PC-9 (cell line): ENCODE measurements at regions of chr11 and their contacts with region 1.

Region 1: DNA sequence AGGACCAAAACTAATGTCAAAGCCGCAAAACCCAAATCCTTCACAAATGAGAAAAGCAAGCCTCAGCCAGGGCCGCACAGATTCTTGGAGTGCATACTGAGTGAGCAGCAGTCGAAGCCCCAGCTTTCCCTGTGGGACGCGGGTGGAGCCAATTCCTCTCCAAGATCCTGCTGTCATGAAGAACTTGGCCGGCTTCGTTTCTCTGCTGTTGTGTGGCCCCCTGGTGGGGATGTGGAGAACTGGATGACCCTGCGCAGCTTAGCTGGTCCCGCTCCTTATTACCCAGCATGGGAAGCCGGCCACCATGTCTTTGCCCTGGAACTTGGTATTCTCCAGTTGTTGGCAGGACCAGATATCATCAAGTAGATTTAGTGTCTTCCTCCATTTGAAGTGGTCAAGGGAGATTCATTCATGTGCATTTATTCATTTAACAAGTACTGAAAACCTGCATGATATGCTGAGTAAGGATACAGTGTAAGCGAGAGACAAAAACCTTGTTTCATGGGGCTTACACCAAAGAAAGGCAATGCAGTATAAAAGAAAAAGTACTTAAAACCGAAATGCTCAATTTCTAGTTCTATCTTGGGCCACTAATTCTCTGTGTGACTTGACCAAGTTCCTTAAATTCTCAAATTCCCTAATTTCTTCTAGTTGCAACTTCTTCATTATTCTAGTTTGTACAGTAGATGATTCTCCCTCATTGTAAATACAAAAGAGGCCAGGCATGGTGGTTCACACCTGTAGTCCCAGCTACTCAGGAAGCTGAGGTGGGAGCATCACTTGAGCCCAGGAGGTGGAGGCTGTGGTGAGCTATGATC is 56.7 kb upstream of the CRTAM start:
- DNase-seq: peak; percentile 62 to 82
- H3K4me3 ChIP-seq: no peak overlapping the region
- H3K27ac ChIP-seq: no peak overlapping the region
- H3K4me1 ChIP-seq: peaks cover 62% of the 10 kb centered on the region
- H3K27me3 ChIP-seq: no peaks in the 10 kb centered on the region
- CTCF ChIP-seq: peak; percentile 95

Region 2: DNA sequence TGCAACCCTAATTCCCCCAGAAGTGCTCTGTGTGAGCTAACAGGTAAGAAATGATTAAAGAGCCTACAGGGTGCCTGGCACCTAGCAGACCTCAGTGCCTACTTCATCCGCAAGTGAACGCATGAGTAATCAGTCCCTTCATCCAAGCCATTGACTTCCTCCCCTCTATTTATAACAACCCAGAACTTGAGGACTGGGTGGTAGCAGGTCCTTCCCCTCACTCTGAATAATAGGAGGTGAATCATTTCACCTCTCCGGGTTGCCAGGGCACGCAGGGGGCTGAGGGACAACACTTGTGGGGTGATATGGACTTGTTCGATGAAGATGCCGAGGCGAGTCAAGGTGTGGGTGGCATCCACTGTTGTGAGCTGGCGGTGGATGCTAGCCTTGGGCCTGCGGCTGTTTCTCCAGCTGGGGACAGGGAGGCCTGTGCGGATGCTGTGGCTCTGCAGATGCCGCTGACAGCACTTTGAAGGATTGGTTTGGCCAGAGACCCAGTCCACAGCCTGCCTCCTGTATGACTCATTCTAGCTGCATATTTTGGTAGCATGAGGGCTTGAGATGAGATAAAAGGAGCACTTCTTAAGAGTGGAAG is 1317.1 kb before region 1 on chr11:
- CTCF ChIA-PET with region 1: no interaction called
- POLR2A ChIA-PET with region 1: interaction called, 22 read pairs
- intact Hi-C with region 1: no loop called
- DNase-seq: peak; percentile 72 to 96
- H3K4me3 ChIP-seq: peak overlapping the region; percentile 9; the same call in 1 of the 2 replicates
- H3K27ac ChIP-seq: peak overlapping the region; percentile 95
- H3K4me1 ChIP-seq: peaks cover 93% of the 10 kb centered on the region
- H3K27me3 ChIP-seq: no peaks in the 10 kb centered on the region
- CTCF ChIP-seq: no peak

Region 3: DNA sequence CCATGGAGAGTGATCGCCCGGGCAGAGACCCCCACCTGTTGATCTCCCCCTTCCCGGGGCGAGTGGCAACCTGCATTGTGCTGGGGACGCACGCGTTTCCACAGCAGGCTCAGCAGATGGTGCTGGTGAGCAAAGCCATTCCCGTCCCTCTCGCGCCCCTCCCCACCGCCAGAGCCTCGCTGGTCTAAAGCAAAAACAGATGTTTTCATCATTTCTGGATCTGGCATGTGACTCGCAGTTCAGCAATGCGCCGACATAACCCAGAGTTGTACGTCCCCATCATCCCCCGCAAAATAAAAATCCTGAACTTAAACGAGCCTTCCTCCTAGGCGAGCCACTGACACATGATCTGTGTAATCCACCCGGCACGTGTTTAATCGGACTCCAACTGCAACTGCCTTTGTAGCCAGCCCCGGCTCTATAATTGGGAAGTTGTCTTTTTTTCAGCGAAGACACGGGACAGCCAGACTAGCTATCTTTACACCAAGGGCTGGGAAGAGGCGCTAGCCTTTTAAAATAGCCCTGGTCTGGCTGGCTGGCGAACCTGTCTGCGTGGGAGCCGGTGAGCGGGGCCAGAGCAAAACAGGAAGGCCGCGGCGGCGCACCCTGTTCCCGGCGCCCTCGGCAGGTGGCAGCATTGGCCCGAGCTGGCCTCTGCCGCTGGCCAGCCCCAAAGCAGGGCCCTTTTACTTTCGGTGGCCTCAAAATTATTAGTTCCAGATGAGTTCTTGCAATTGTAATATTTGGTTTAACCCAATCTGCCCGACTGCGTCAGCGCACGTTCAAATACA is 1125.9 kb before region 1 on chr11:
- CTCF ChIA-PET with region 1: no interaction called
- POLR2A ChIA-PET with region 1: no interaction called
- intact Hi-C with region 1: loop called (anchors 10 kb)
- DNase-seq: peak; percentile 58 to 81
- H3K4me3 ChIP-seq: peak overlapping the region; percentile 60
- H3K27ac ChIP-seq: peak overlapping the region; percentile 52
- H3K4me1 ChIP-seq: peaks cover 11% of the 10 kb centered on the region; the same call in 1 of the 2 replicates
- H3K27me3 ChIP-seq: no peaks in the 10 kb centered on the region
- CTCF ChIP-seq: peak; percentile 94

Region 4: DNA sequence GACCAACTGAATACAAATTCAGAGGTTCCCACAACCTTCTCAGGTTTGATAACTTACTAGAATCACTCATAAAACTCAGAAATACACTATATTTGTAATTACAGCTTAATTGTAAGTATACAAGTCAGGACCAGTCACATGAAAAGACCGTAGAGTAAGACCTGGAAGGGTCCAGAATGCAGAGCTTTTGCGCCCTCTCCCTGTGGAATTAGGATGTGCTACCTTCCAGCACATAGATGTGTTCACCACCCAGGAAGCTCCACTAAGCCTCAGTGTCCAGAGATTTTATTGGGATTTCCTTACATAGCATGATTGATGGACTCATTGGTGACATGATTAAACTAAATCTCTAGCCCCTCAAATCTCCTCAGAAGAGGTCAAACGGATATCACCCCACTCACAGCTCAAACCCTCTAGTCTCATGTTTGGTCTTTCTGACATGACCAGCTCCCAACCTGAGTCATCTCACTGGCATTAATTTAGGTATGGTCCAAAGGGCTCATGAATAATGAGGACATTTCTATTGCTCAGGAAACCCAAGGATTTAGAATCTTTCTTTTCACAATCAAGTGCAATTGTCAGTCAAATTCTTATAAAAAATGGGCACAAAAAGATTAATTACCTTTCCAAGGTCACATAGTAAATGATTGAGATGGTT is 203.3 kb before region 1 on chr11:
- CTCF ChIA-PET with region 1: no interaction called
- POLR2A ChIA-PET with region 1: no interaction called
- intact Hi-C with region 1: loop called (anchors 1 kb)
- DNase-seq: no peak
- H3K4me3 ChIP-seq: no peak overlapping the region
- H3K27ac ChIP-seq: no peak overlapping the region
- H3K4me1 ChIP-seq: peaks cover 11% of the 10 kb centered on the region
- H3K27me3 ChIP-seq: no peaks in the 10 kb centered on the region
- CTCF ChIP-seq: no peak

Region 5: GRCh38 chr11:122628810-122629555 is 152.6 kb before region 1 on chr11:
- CTCF ChIA-PET with region 1: interaction called, 20 read pairs
- POLR2A ChIA-PET with region 1: interaction called, 3 read pairs
- intact Hi-C with region 1: loop called (anchors 1 kb)
- DNase-seq: peak; percentile 53 to 65
- H3K4me3 ChIP-seq: no peak overlapping the region
- H3K27ac ChIP-seq: no peak overlapping the region
- H3K4me1 ChIP-seq: peaks cover 36% of the 10 kb centered on the region
- H3K27me3 ChIP-seq: no peaks in the 10 kb centered on the region
- CTCF ChIP-seq: peak; percentile 86

Region 6: GRCh38 chr11:122661182-122661945 is 120.2 kb before region 1 on chr11:
- CTCF ChIA-PET with region 1: no interaction called
- POLR2A ChIA-PET with region 1: interaction called, 3 read pairs
- intact Hi-C with region 1: loop called (anchors 1 kb)
- DNase-seq: peak; percentile 64 to 100
- H3K4me3 ChIP-seq: peak overlapping the region; percentile 39; the same call in 1 of the 2 replicates
- H3K27ac ChIP-seq: peak overlapping the region; percentile 91
- H3K4me1 ChIP-seq: peaks cover 87% of the 10 kb centered on the region
- H3K27me3 ChIP-seq: no peaks in the 10 kb centered on the region
- CTCF ChIP-seq: no peak

Region 7: GRCh38 chr11:122711831-122712381 is 69.7 kb before region 1 on chr11:
- CTCF ChIA-PET with region 1: no interaction called
- POLR2A ChIA-PET with region 1: interaction called, 3 read pairs
- intact Hi-C with region 1: loop called (anchors 2 kb)
- DNase-seq: peak; percentile 49 to 72
- H3K4me3 ChIP-seq: no peak overlapping the region
- H3K27ac ChIP-seq: no peak overlapping the region; the same call in 1 of the 2 replicates
- H3K4me1 ChIP-seq: peaks cover 32% of the 10 kb centered on the region
- H3K27me3 ChIP-seq: no peaks in the 10 kb centered on the region
- CTCF ChIP-seq: no peak